Left cardiac atrium (tissue), 4 donors: ENCODE measurements at regions of chr15 and their contacts with region 1.

Region 1: GRCh38 chr15:35665896-35666536 is 120.1 kb upstream of the DPH6 start:
- DNase-seq: peak; percentile 73
- ATAC-seq: peak; percentile 91 to 92

Region 2: GRCh38 chr15:35583863-35584528 is 82.0 kb before region 1 on chr15:
- intact Hi-C with region 1: loop called in 1 of 2 experiments (anchors 10 kb)
- DNase-seq: no peak
- ATAC-seq: peak; percentile 88 to 95

Region 3: DNA sequence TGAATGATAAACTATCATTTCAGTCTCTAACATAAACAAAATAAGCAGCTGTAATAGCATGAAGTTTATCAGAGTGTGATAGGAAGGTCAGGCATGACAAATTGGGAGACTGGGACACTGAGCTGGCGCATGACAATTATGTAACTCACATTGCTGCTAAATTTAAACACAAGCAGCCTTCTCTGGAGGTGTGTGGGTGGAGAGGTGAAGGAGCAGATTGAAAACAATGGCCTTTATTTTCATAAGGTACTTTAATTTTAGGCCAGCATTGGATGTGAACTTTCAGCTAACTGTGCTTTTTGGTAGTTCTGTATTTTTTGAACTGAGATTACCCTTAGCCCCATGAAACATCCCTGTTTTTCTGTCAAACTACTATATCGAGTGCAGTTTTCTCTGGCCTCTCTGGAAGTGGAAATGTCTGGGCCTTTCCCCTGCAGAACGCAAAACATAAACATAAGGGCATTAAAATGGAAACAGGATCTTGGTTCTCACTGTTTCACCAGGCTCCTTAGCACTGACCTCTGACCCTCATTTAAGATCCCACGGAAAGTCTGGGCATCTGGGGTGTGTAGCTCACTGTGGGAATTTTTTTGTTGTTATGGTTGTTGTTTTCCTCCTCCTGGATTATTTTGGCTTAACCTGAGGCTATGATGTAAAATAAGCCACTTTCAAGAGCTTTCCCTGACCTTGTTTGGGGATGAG is 40.0 kb after region 1 on chr15:
- intact Hi-C with region 1: loop called in 1 of 2 experiments (anchors 5 kb)
- DNase-seq: no peak
- ATAC-seq: peak; percentile 90 to 97